Activated CD4-positive, alpha-beta T cell treated with anti-CD3 and anti-CD28 coated beads for 36 hours (primary cell): ENCODE measurements at regions of chr5 and their contacts with region 1.

Region 1: GRCh38 chr5:54217826-54218503 is 92.4 kb downstream of the ARL15 start:
- DNase-seq: peak; percentile 12
- ATAC-seq: no peak
- H3K4me3 Mint-ChIP-seq: no peak overlapping the region
- H3K27ac Mint-ChIP-seq: no peak overlapping the region
- H3K4me1 Mint-ChIP-seq: peaks cover 7% of the 10 kb centered on the region
- H3K27me3 Mint-ChIP-seq: no peaks in the 10 kb centered on the region

Region 2: GRCh38 chr5:53170748-53171349 is 1047.1 kb before region 1 on chr5:
- CTCF ChIA-PET with region 1: no interaction called
- POLR2A ChIA-PET with region 1: no interaction called
- intact Hi-C with region 1: loop called in 1 of 2 experiments (anchors 2 kb)
- DNase-seq: peak; percentile 16
- ATAC-seq: no peak
- H3K4me3 Mint-ChIP-seq: no peak overlapping the region
- H3K27ac Mint-ChIP-seq: no peak overlapping the region
- H3K4me1 Mint-ChIP-seq: no peaks in the 10 kb centered on the region
- H3K27me3 Mint-ChIP-seq: peaks cover 7% of the 10 kb centered on the region

Region 3: GRCh38 chr5:53262348-53262970 is 955.5 kb before region 1 on chr5:
- CTCF ChIA-PET with region 1: no interaction called
- POLR2A ChIA-PET with region 1: no interaction called
- intact Hi-C with region 1: loop called in 1 of 2 experiments (anchors 2 kb)
- DNase-seq: peak; percentile 26
- ATAC-seq: no peak
- H3K4me3 Mint-ChIP-seq: no peak overlapping the region
- H3K27ac Mint-ChIP-seq: no peak overlapping the region
- H3K4me1 Mint-ChIP-seq: no peaks in the 10 kb centered on the region
- H3K27me3 Mint-ChIP-seq: peaks cover 12% of the 10 kb centered on the region